ENCODE measurements at regions of chr4 and their contacts with region 1.

Region 1: GRCh38 chr4:85798012-85798770 is 323.2 kb downstream of the ARHGAP24 start:
- DNase-seq: no peak
- H3K4me3 ChIP-seq: no peak overlapping the region
- H3K27ac ChIP-seq: no peak overlapping the region
- H3K4me1 ChIP-seq: peaks cover 0 to 9% of the 10 kb centered on the region in 2 experiments; a peak in 1 of 4 replicates
- H3K27me3 ChIP-seq: no peaks in the 10 kb centered on the region
- CTCF ChIP-seq: no peak
- EP300 ChIP-seq: no peak
- RAD21 ChIP-seq: no peak

Region 2: GRCh38 chr4:85409251-85409650 is 388.9 kb before region 1 on chr4:
- CTCF ChIA-PET with region 1: no interaction called
- POLR2A ChIA-PET with region 1: no interaction called
- DNase-seq: no peak
- H3K4me3 ChIP-seq: no peak overlapping the region
- H3K27ac ChIP-seq: peak overlapping the region in 1 of 2 experiments; percentile 39; a peak in 2 of 4 replicates
- H3K4me1 ChIP-seq: peaks cover 3 to 10% of the 10 kb centered on the region in 2 experiments; a peak in 3 of 4 replicates
- H3K27me3 ChIP-seq: no peaks in the 10 kb centered on the region
- CTCF ChIP-seq: no peak
- EP300 ChIP-seq: no peak
- RAD21 ChIP-seq: no peak

Region 3: GRCh38 chr4:85747882-85748491 is 50.2 kb before region 1 on chr4:
- CTCF ChIA-PET with region 1: interaction called, 14 read pairs
- POLR2A ChIA-PET with region 1: no interaction called
- DNase-seq: peak; percentile 44
- H3K4me3 ChIP-seq: peak overlapping the region in 1 of 2 experiments; percentile 30; a peak in 1 of 4 replicates
- H3K27ac ChIP-seq: peak overlapping the region in 1 of 2 experiments; percentile 65; a peak in 2 of 4 replicates
- H3K4me1 ChIP-seq: peaks cover 0 to 6% of the 10 kb centered on the region in 2 experiments; a peak in 1 of 4 replicates
- H3K27me3 ChIP-seq: no peaks in the 10 kb centered on the region
- CTCF ChIP-seq: peak; percentile 97
- EP300 ChIP-seq: no peak
- RAD21 ChIP-seq: peak; percentile 96

Region 4: GRCh38 chr4:85787138-85787537 is 11.1 kb before region 1 on chr4:
- CTCF ChIA-PET with region 1: interaction called, 30 read pairs
- POLR2A ChIA-PET with region 1: no interaction called
- DNase-seq: no peak
- H3K4me3 ChIP-seq: no peak overlapping the region
- H3K27ac ChIP-seq: peak overlapping the region in 1 of 2 experiments; percentile 92; a peak in 2 of 4 replicates
- H3K4me1 ChIP-seq: peaks cover 0 to 10% of the 10 kb centered on the region in 2 experiments; a peak in 2 of 4 replicates
- H3K27me3 ChIP-seq: no peaks in the 10 kb centered on the region
- CTCF ChIP-seq: no peak
- EP300 ChIP-seq: no peak
- RAD21 ChIP-seq: no peak

Region 5: GRCh38 chr4:85953651-85954018 is 155.4 kb after region 1 on chr4:
- CTCF ChIA-PET with region 1: interaction called, 15 read pairs
- POLR2A ChIA-PET with region 1: no interaction called
- DNase-seq: no peak
- H3K4me3 ChIP-seq: no peak overlapping the region
- H3K27ac ChIP-seq: peak overlapping the region in 1 of 2 experiments; percentile 61; a peak in 1 of 4 replicates
- H3K4me1 ChIP-seq: peaks cover 0 to 2% of the 10 kb centered on the region in 2 experiments; a peak in 2 of 4 replicates
- H3K27me3 ChIP-seq: no peaks in the 10 kb centered on the region
- CTCF ChIP-seq: no peak
- EP300 ChIP-seq: no peak
- RAD21 ChIP-seq: no peak

Region 6: GRCh38 chr4:85986266-85986665 is 188.1 kb after region 1 on chr4:
- CTCF ChIA-PET with region 1: interaction called, 14 read pairs
- POLR2A ChIA-PET with region 1: no interaction called
- DNase-seq: no peak
- H3K4me3 ChIP-seq: no peak overlapping the region
- H3K27ac ChIP-seq: no peak overlapping the region
- H3K4me1 ChIP-seq: no peaks in the 10 kb centered on the region
- H3K27me3 ChIP-seq: no peaks in the 10 kb centered on the region
- CTCF ChIP-seq: no peak
- EP300 ChIP-seq: no peak
- RAD21 ChIP-seq: no peak

Region 7: GRCh38 chr4:86055898-86056297 is 257.7 kb after region 1 on chr4:
- CTCF ChIA-PET with region 1: interaction called, 159 read pairs
- POLR2A ChIA-PET with region 1: no interaction called
- DNase-seq: no peak
- H3K4me3 ChIP-seq: no peak overlapping the region
- H3K27ac ChIP-seq: no peak overlapping the region
- H3K4me1 ChIP-seq: no peaks in the 10 kb centered on the region; a peak in 1 of 4 replicates
- H3K27me3 ChIP-seq: no peaks in the 10 kb centered on the region
- CTCF ChIP-seq: no peak
- EP300 ChIP-seq: no peak
- RAD21 ChIP-seq: no peak

Region 8: DNA sequence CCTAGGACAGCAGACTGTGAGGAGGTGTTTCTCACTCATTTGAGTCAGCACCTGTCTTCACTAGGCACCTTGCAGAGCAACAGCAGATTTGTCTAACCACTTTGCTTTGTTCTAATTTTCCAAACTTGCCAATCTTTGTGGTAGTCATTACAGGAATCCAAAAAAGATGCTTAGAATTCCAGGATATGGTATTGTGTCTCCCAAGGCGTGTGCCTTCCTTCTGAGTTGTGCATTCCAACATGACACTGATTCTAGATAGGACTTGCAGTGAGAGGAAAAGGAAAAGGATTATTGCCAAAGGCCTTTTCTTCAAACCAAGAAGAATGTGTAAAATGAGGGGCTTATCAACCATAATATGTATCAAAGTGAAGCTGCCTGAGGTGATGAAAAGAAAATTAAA is 435.5 kb after region 1 on chr4:
- CTCF ChIA-PET with region 1: no interaction called
- POLR2A ChIA-PET with region 1: no interaction called
- DNase-seq: no peak
- H3K4me3 ChIP-seq: no peak overlapping the region; a peak in 1 of 4 replicates
- H3K27ac ChIP-seq: peak overlapping the region in 1 of 2 experiments; percentile 72; a peak in 3 of 4 replicates
- H3K4me1 ChIP-seq: no peaks in the 10 kb centered on the region; a peak in 1 of 4 replicates
- H3K27me3 ChIP-seq: no peaks in the 10 kb centered on the region
- CTCF ChIP-seq: no peak
- EP300 ChIP-seq: peak; percentile 38 to 77; a peak in 3 of 4 replicates
- RAD21 ChIP-seq: no peak